Caco-2 (cell line): ENCODE measurements at regions of chr13 and their contacts with region 1.

Region 1: DNA sequence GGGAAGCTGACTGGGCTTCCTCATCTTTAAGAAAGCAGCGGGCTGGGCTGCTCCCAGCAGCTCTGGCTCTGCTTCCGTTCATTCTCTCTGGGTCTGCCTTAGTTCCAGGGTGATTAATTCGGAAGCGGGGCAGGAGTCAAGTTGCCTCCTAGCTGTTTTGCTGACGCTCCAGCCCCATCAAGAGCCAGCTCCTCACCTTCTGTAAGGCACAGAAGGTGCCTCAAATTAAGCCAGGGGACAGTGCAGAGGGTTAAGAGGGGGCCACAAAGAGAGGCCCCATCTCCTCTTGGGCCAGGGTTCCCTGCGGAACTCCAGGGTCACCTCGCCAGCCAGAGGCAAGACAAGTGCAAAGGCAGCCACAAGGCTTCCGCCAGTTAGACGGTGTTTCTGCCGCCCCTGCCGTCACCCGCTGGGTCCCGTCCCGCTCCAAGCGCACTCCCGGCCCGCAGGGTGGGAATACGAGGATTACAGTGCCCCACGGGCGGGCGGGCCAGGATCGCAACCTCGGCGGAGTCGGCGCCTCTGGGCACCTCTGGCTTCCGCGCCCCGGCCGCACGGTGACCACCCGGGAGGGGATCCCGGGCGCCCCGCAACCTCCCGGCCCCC is 508 bp downstream of the SLC15A1 start:
- DNase-seq: peak in 1 of 2 experiments; percentile 55
- H3K4me3 ChIP-seq: peak overlapping the region; percentile 81
- H3K4me3 Mint-ChIP-seq: peak overlapping the region; percentile 74
- H3K27ac Mint-ChIP-seq: peak overlapping the region; percentile 62
- H3K4me1 ChIP-seq: peaks cover 12% of the 10 kb centered on the region
- H3K4me1 Mint-ChIP-seq: peaks cover 14% of the 10 kb centered on the region
- H3K27me3 ChIP-seq: no peaks in the 10 kb centered on the region
- H3K27me3 Mint-ChIP-seq: peaks cover 3% of the 10 kb centered on the region
- CTCF ChIP-seq: no peak

Region 2: DNA sequence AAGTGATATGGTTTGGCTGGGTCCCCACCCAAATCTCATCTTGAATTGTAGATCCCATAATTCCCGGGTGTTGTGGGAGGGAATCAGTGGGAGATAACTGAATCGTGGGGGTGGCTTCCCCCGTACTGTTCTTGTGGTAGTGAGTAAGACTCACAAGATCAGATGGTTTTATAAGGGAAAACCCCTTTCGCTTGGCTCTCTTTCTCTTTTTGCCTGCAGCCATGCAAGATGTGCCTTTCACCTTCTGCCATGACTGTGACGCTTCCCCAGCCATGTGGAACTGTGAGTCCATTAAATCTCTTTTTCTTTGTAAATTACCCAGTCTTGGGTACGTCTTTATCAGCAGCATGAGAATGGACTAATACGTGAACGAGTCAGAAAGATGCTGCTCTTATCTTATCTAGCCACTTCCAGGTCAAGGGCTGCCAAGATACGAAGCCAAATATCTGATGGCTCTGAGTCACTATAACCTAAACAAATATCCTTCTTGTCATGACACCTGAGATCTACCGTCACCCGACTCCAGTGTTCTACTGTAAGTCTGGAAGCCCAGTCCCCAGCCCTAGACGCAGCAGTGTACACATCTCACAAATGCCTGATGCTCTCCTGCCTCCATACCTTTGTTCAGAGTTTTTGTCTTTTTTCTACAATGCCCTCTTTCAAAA is 45.4 kb before region 1 on chr13:
- CTCF ChIA-PET with region 1: no interaction called
- POLR2A ChIA-PET with region 1: no interaction called
- intact Hi-C with region 1: loop called (anchors 5 kb)
- DNase-seq: peak; percentile 70 to 84
- H3K4me3 ChIP-seq: no peak overlapping the region
- H3K4me3 Mint-ChIP-seq: peak overlapping the region; percentile 8
- H3K27ac Mint-ChIP-seq: peak overlapping the region; percentile 14
- H3K4me1 ChIP-seq: peaks cover 14% of the 10 kb centered on the region
- H3K4me1 Mint-ChIP-seq: peaks cover 12% of the 10 kb centered on the region
- H3K27me3 ChIP-seq: no peaks in the 10 kb centered on the region
- H3K27me3 Mint-ChIP-seq: no peaks in the 10 kb centered on the region
- CTCF ChIP-seq: no peak

Region 3: GRCh38 chr13:98765996-98766519 is 14.1 kb after region 1 on chr13:
- CTCF ChIA-PET with region 1: no interaction called
- POLR2A ChIA-PET with region 1: no interaction called
- intact Hi-C with region 1: loop called (anchors 2 kb)
- DNase-seq: no peak
- H3K4me3 ChIP-seq: no peak overlapping the region
- H3K4me3 Mint-ChIP-seq: no peak overlapping the region
- H3K27ac Mint-ChIP-seq: no peak overlapping the region
- H3K4me1 ChIP-seq: peaks cover 7% of the 10 kb centered on the region
- H3K4me1 Mint-ChIP-seq: peaks cover 19% of the 10 kb centered on the region
- H3K27me3 ChIP-seq: no peaks in the 10 kb centered on the region
- H3K27me3 Mint-ChIP-seq: no peaks in the 10 kb centered on the region
- CTCF ChIP-seq: no peak

Region 4: GRCh38 chr13:98821372-98822224 is 69.6 kb after region 1 on chr13:
- CTCF ChIA-PET with region 1: no interaction called
- POLR2A ChIA-PET with region 1: no interaction called
- intact Hi-C with region 1: loop called (anchors 2 kb)
- DNase-seq: peak; percentile 54 to 59
- H3K4me3 ChIP-seq: no peak overlapping the region
- H3K4me3 Mint-ChIP-seq: peak overlapping the region; percentile 32
- H3K27ac Mint-ChIP-seq: peak overlapping the region; percentile 10
- H3K4me1 ChIP-seq: peaks cover 31% of the 10 kb centered on the region
- H3K4me1 Mint-ChIP-seq: peaks cover 17% of the 10 kb centered on the region
- H3K27me3 ChIP-seq: no peaks in the 10 kb centered on the region
- H3K27me3 Mint-ChIP-seq: no peaks in the 10 kb centered on the region
- CTCF ChIP-seq: no peak